Calu3 (cell line): ENCODE measurements at regions of chr6 and their contacts with region 1.

Region 1: GRCh38 chr6:73969971-73970970 is 274.3 kb downstream of the CD109 start:
- DNase-seq: peak; percentile 20
- H3K4me3 Mint-ChIP-seq: no peak overlapping the region
- H3K27ac Mint-ChIP-seq: no peak overlapping the region
- H3K4me1 Mint-ChIP-seq: no peaks in the 10 kb centered on the region
- H3K27me3 Mint-ChIP-seq: no peaks in the 10 kb centered on the region
- CTCF ChIP-seq: peak; percentile 33

Region 2: DNA sequence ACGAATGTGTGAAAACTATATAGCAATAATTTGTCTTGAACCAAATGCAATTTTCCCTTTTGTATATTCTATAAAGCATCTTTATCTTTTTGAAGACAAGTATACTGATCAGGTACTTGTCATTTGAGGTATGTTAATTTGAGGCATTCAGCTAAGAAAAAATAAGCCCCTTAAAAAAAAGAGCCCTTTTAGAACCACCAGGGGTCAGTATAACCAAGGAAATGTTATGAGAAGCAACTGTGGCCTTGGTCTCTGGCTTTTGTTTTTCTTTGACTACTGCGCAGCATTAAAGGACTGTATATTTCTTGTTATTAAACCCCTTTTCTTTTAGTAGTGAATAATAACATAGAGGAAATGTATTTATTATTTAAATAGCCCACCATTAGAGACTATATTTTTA is 231.2 kb before region 1 on chr6:
- CTCF ChIA-PET with region 1: no interaction called
- intact Hi-C with region 1: loop called (anchors 5 kb)
- DNase-seq: no peak
- H3K4me3 Mint-ChIP-seq: no peak overlapping the region
- H3K27ac Mint-ChIP-seq: no peak overlapping the region
- H3K4me1 Mint-ChIP-seq: no peaks in the 10 kb centered on the region
- H3K27me3 Mint-ChIP-seq: no peaks in the 10 kb centered on the region
- CTCF ChIP-seq: peak; percentile 44

Region 3: DNA sequence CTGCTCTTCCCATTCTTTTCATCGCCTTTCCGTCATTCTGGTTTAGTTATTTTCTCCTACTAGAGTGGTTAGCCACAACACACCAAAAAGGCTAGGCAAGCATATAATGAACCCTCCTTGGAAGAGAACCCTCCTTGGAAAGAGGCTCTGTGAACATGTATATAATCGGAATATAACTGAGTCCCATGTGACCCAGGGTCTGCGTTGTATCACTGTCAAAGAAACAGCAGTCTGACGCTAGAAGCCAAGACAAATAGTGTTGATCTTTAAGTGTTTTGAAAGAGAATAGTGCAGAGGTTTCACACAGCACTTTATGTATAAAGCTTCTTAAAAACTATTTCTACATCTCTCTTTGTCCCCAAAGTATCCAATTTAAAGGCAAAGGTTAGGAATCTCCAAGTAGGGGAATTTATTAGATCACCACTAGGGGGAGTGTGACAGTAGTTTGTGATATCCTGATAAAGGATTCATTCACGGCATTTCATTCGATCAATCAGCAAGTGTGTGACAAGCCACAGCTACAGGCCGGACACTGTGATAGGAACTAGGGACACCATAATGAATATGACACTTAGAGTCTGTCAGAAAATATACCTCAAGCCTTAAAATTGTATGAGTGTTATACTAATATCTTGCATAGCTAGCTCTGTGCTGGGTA is 121.0 kb after region 1 on chr6:
- CTCF ChIA-PET with region 1: interaction called, 6 read pairs
- intact Hi-C with region 1: loop called (anchors 10 kb)
- DNase-seq: peak; percentile 25
- H3K4me3 Mint-ChIP-seq: no peak overlapping the region
- H3K27ac Mint-ChIP-seq: no peak overlapping the region
- H3K4me1 Mint-ChIP-seq: peaks cover 9% of the 10 kb centered on the region
- H3K27me3 Mint-ChIP-seq: no peaks in the 10 kb centered on the region
- CTCF ChIP-seq: peak; percentile 52

Region 4: DNA sequence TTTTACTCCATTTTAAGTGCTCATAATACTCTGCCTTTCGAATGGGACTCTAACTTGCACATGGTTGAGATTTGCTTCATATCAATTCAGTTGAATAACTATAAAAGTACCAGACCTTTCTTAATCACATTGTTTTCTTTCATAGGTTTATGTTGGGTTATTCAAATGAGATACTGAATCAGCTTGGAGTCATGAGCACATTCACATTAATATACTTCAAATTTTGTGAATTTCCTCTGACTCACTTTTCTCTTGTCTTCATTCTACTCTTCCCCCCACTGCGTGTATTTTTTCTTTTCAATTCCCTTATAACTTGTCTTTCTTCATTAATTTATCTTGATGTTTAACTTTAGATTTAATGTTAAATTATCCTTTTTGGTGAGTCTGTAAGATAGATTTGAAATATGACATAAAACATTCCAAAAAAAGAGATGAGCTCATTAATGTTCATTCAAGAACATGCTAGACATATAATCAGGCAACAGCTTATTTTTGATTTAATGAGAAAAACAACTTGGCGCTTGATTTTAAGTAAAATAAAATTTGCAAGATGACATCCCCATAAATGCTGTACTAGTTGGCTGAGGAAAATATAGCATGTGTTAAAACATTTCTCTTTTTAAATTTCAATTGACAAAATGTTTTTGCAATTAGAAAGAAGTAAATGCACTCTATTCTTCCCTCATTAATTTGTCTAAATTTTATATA is 461.8 kb after region 1 on chr6:
- CTCF ChIA-PET with region 1: no interaction called
- intact Hi-C with region 1: no loop called
- DNase-seq: no peak
- H3K4me3 Mint-ChIP-seq: no peak overlapping the region
- H3K27ac Mint-ChIP-seq: no peak overlapping the region
- H3K4me1 Mint-ChIP-seq: peaks cover 23% of the 10 kb centered on the region
- H3K27me3 Mint-ChIP-seq: no peaks in the 10 kb centered on the region
- CTCF ChIP-seq: no peak